H1 (cell line): ENCODE measurements at regions of chr1 and their contacts with region 1.

Region 1: GRCh38 chr1:155946633-155947219 is 5.3 kb downstream of the RXFP4 start:
- DNase-seq: no peak
- H3K4me3 ChIP-seq: no peak overlapping the region
- H3K27ac ChIP-seq: no peak overlapping the region
- H3K4me1 ChIP-seq: peaks cover 0 to 8% (median 4%) of the 10 kb centered on the region in 4 experiments; a peak in 4 of 7 replicates
- H3K27me3 ChIP-seq: no peaks in the 10 kb centered on the region
- CTCF ChIP-seq: no peak
- EP300 ChIP-seq: no peak
- POLR2A ChIP-seq: no peak
- RAD21 ChIP-seq: no peak

Region 2: GRCh38 chr1:155900161-155900560 is 46.6 kb before region 1 on chr1:
- CTCF ChIA-PET with region 1: no interaction called
- POLR2A ChIA-PET with region 1: no interaction called
- DNase-seq: no peak
- H3K4me3 ChIP-seq: no peak overlapping the region
- H3K27ac ChIP-seq: no peak overlapping the region
- H3K4me1 ChIP-seq: no peaks in the 10 kb centered on the region
- H3K27me3 ChIP-seq: no peaks in the 10 kb centered on the region
- CTCF ChIP-seq: no peak
- EP300 ChIP-seq: no peak
- POLR2A ChIP-seq: no peak
- RAD21 ChIP-seq: no peak

Region 3: GRCh38 chr1:155934097-155934935 is 12.4 kb before region 1 on chr1 and contains the start of gene KHDC4:
- CTCF ChIA-PET with region 1: interaction called, 18 read pairs
- POLR2A ChIA-PET with region 1: interaction called, 71 read pairs
- DNase-seq: peak; percentile 87 to 96
- H3K4me3 ChIP-seq: peak within 1 kb of the TSS; percentile 89 to 100 (median 94)
- H3K27ac ChIP-seq: peak within 1 kb of the TSS; percentile 88
- H3K4me1 ChIP-seq: peaks cover 0 to 2% (median 1%) of the 10 kb centered on the region in 4 experiments; a peak in 4 of 7 replicates
- H3K27me3 ChIP-seq: no peaks in the 10 kb centered on the region
- CTCF ChIP-seq: no peak
- EP300 ChIP-seq: no peak
- POLR2A ChIP-seq: peak; percentile 91 to 96
- RAD21 ChIP-seq: peak in 1 of 2 experiments; percentile 10; a peak in 2 of 4 replicates
- total RNA-seq, gene KHDC4: 53.4 and 56.6 TPM in 2 replicates